SK-N-SH (cell line): ENCODE measurements at regions of chr1 and their contacts with region 1.

Region 1: GRCh38 chr1:225772323-225772768 is 5.3 kb upstream of the SRP9 start:
- DNase-seq: peak; percentile 79
- H3K4me3 ChIP-seq: peak overlapping the region in 1 of 2 experiments; percentile 39; a peak in 1 of 4 replicates
- H3K27ac ChIP-seq: peak overlapping the region; percentile 56 to 78
- H3K4me1 ChIP-seq: peaks cover 24 to 48% of the 10 kb centered on the region in 2 experiments
- H3K27me3 ChIP-seq: no peaks in the 10 kb centered on the region
- CTCF ChIP-seq: peak; percentile 95
- EP300 ChIP-seq: no peak
- RAD21 ChIP-seq: peak; percentile 99

Region 2: DNA sequence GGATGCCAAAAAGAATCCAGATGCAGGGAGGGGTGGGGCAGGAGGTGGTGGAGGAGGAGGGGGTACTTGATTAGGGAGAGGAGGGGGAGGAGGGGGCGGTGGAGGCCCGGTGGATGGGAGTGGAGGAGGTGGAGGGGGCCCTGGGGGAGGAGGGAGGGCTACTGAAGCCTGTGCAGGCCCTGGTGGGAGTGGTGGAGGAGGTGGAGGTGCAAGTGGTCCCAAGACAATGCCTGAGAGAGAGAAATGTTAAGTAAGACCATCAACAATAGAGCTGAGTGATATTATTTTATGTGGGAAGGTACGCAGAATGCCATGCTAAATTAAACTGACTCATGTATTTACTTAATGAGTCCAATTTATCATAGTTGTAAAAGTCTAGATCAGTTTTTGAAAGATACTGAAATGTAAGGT is 257.7 kb before region 1 on chr1:
- CTCF ChIA-PET with region 1: interaction called, 11 read pairs
- POLR2A ChIA-PET with region 1: no interaction called
- DNase-seq: no peak
- H3K4me3 ChIP-seq: no peak overlapping the region
- H3K27ac ChIP-seq: no peak overlapping the region
- H3K4me1 ChIP-seq: peaks cover 0 to 19% of the 10 kb centered on the region in 2 experiments; a peak in 2 of 4 replicates
- H3K27me3 ChIP-seq: no peaks in the 10 kb centered on the region
- CTCF ChIP-seq: no peak
- EP300 ChIP-seq: no peak
- RAD21 ChIP-seq: no peak

Region 3: GRCh38 chr1:225554216-225554812 is 218.0 kb before region 1 on chr1:
- CTCF ChIA-PET with region 1: interaction called, 95 read pairs
- POLR2A ChIA-PET with region 1: no interaction called
- DNase-seq: peak; percentile 53
- H3K4me3 ChIP-seq: no peak overlapping the region; a peak in 1 of 4 replicates
- H3K27ac ChIP-seq: no peak overlapping the region
- H3K4me1 ChIP-seq: no peaks in the 10 kb centered on the region; a peak in 1 of 4 replicates
- H3K27me3 ChIP-seq: no peaks in the 10 kb centered on the region
- CTCF ChIP-seq: peak; percentile 70
- EP300 ChIP-seq: no peak
- RAD21 ChIP-seq: peak; percentile 71

Region 4: DNA sequence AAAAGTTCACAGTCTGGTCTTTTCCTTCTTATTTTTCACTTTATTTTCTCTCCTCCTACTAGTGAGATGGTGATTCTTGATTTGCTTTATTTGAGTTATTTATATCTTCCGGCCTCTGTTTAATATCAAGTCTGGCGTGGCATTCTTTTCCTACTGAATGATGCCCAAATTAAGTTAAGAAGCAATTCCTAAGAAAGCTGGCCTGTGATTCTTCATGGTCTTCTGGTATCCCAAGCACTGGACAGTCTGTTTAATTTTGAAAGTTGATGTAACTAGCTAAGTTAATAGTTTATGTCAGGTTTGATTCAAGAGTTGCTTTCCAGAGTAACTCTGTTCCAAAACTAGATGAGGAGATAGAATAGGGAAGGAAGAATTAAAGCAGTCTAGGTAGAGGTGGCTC is 110.2 kb before region 1 on chr1:
- CTCF ChIA-PET with region 1: interaction called, 12 read pairs
- POLR2A ChIA-PET with region 1: no interaction called
- DNase-seq: no peak
- H3K4me3 ChIP-seq: no peak overlapping the region
- H3K27ac ChIP-seq: peak overlapping the region; percentile 65 to 89; a peak in 3 of 4 replicates
- H3K4me1 ChIP-seq: peaks cover 4 to 19% of the 10 kb centered on the region in 2 experiments
- H3K27me3 ChIP-seq: no peaks in the 10 kb centered on the region
- CTCF ChIP-seq: no peak
- EP300 ChIP-seq: peak; percentile 75 to 84
- RAD21 ChIP-seq: no peak

Region 5: GRCh38 chr1:225863167-225863566 is 90.8 kb after region 1 on chr1:
- CTCF ChIA-PET with region 1: no interaction called
- POLR2A ChIA-PET with region 1: no interaction called
- DNase-seq: no peak
- H3K4me3 ChIP-seq: no peak overlapping the region
- H3K27ac ChIP-seq: no peak overlapping the region
- H3K4me1 ChIP-seq: peaks cover 0 to 20% of the 10 kb centered on the region in 2 experiments; a peak in 2 of 4 replicates
- H3K27me3 ChIP-seq: no peaks in the 10 kb centered on the region
- CTCF ChIP-seq: no peak
- EP300 ChIP-seq: no peak
- RAD21 ChIP-seq: no peak

Region 6: GRCh38 chr1:225977937-225978748 is 205.8 kb after region 1 on chr1:
- CTCF ChIA-PET with region 1: interaction called, 26 read pairs
- POLR2A ChIA-PET with region 1: no interaction called
- DNase-seq: no peak
- H3K4me3 ChIP-seq: no peak overlapping the region
- H3K27ac ChIP-seq: no peak overlapping the region
- H3K4me1 ChIP-seq: no peaks in the 10 kb centered on the region; a peak in 1 of 4 replicates
- H3K27me3 ChIP-seq: no peaks in the 10 kb centered on the region
- CTCF ChIP-seq: no peak
- EP300 ChIP-seq: no peak
- RAD21 ChIP-seq: no peak

Region 7: GRCh38 chr1:227134686-227135314 is 1362.5 kb after region 1 on chr1:
- CTCF ChIA-PET with region 1: no interaction called
- POLR2A ChIA-PET with region 1: no interaction called
- DNase-seq: no peak
- H3K4me3 ChIP-seq: no peak overlapping the region
- H3K27ac ChIP-seq: no peak overlapping the region
- H3K4me1 ChIP-seq: no peaks in the 10 kb centered on the region; a peak in 1 of 4 replicates
- H3K27me3 ChIP-seq: no peaks in the 10 kb centered on the region
- CTCF ChIP-seq: no peak
- EP300 ChIP-seq: no peak
- RAD21 ChIP-seq: no peak